Esophagus muscularis mucosa (tissue), 4 donors: ENCODE measurements at regions of chr17 and their contacts with region 1.

Region 1: GRCh38 chr17:75978938-75979704 is at the starts of genes ACOX1 and TEN1:
- DNase-seq: peak; percentile 99
- H3K4me3 ChIP-seq: peak within 1 kb of the TSS; percentile 72 to 98 (median 88)
- H3K27ac ChIP-seq: peak within 1 kb of the TSS; percentile 92 to 99 (median 97)
- H3K4me1 ChIP-seq: peaks cover 39 to 55% (median 46%) of the 10 kb centered on the region in 4 donors
- H3K27me3 ChIP-seq: no peaks in the 10 kb centered on the region
- CTCF ChIP-seq: peak; percentile 7 to 40 (median 22)
- EP300 ChIP-seq: no peak
- POLR2A ChIP-seq: peak; percentile 80
- total RNA-seq, gene ACOX1: 45.3 to 57.4 (median 48.9) TPM
- total RNA-seq, gene TEN1: 4.6 to 11.3 (median 10.7) TPM

Region 2: DNA sequence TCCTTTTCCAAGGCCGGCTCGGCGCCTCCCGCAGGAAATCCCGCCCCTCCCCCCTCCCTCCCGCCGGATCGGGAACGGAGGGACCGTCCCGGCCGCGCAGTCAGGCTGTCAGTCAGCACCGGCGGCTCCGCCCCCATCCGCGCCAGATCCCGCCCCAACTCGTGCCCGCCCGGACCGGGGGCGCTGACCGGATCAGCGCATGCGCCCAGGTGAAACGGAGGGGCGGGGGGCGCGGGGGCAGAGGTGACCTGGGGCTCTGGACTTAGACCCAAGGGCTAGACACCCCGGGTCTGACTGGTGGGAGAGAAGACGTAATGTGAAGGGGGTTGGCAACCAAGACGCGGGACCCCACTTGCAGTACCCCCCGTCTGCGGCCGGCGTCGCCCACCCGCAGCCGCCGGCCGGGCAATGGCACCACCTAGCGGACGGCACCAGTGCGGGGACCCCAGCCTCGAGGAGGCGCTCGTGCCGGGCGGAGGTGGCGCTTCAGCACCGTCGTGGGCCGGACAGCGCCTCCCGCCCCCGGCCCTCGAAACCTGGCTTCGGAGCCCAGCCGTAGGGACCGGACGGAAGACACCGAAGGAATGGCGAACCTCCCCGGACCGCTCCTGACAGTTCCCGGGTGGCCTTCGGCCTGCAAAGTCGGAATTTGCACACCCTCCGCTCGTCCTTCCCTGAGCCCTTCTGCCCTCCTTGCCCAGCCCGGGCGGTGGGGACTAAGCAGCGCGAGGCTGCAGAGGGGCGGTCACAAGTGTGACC is 463.4 kb before region 1 on chr17 and contains the start of gene CASKIN2:
- intact Hi-C with region 1: no loop called
- DNase-seq: peak; percentile 97
- H3K4me3 ChIP-seq: peak within 1 kb of the TSS; percentile 92 to 98 (median 96)
- H3K27ac ChIP-seq: peak within 1 kb of the TSS; percentile 93 to 96 (median 94)
- H3K4me1 ChIP-seq: peaks cover 48 to 70% (median 60%) of the 10 kb centered on the region in 4 donors
- H3K27me3 ChIP-seq: no peaks in the 10 kb centered on the region
- CTCF ChIP-seq: peak; percentile 96 to 97 (median 97)
- EP300 ChIP-seq: no peak
- POLR2A ChIP-seq: no peak
- total RNA-seq, gene CASKIN2: 16.2 to 43.5 (median 35.5) TPM

Region 3: GRCh38 chr17:75904749-75905521 is 74.2 kb before region 1 on chr17 and contains the start of gene MRPL38:
- intact Hi-C with region 1: loop called (anchors 5 kb)
- DNase-seq: peak; percentile 97
- H3K4me3 ChIP-seq: peak within 1 kb of the TSS; percentile 74 to 96 (median 88)
- H3K27ac ChIP-seq: peak within 1 kb of the TSS; percentile 90 to 93 (median 92)
- H3K4me1 ChIP-seq: peaks cover 12 to 28% (median 24%) of the 10 kb centered on the region in 4 donors
- H3K27me3 ChIP-seq: no peaks in the 10 kb centered on the region
- CTCF ChIP-seq: peak; percentile 98 to 99 (median 99)
- EP300 ChIP-seq: no peak
- POLR2A ChIP-seq: peak; percentile 58
- total RNA-seq, gene MRPL38: 32.5 to 61.7 (median 44.1) TPM

Region 4: GRCh38 chr17:75940724-75941441 is 38.2 kb before region 1 on chr17 and contains the start of gene FBF1:
- intact Hi-C with region 1: loop called (anchors 5 kb)
- DNase-seq: peak; percentile 97
- H3K4me3 ChIP-seq: peak within 1 kb of the TSS; percentile 66 to 90 (median 81)
- H3K27ac ChIP-seq: peak within 1 kb of the TSS; percentile 73 to 86 (median 80)
- H3K4me1 ChIP-seq: peaks cover 10 to 17% (median 13%) of the 10 kb centered on the region in 4 donors
- H3K27me3 ChIP-seq: no peaks in the 10 kb centered on the region
- CTCF ChIP-seq: peak in 1 of 3 experiments; percentile 8
- EP300 ChIP-seq: no peak
- POLR2A ChIP-seq: peak; percentile 78
- total RNA-seq, gene FBF1: 7.8 to 15.0 (median 10.4) TPM